ENCODE measurements at regions of chr14 and their contacts with region 1.

Region 1: DNA sequence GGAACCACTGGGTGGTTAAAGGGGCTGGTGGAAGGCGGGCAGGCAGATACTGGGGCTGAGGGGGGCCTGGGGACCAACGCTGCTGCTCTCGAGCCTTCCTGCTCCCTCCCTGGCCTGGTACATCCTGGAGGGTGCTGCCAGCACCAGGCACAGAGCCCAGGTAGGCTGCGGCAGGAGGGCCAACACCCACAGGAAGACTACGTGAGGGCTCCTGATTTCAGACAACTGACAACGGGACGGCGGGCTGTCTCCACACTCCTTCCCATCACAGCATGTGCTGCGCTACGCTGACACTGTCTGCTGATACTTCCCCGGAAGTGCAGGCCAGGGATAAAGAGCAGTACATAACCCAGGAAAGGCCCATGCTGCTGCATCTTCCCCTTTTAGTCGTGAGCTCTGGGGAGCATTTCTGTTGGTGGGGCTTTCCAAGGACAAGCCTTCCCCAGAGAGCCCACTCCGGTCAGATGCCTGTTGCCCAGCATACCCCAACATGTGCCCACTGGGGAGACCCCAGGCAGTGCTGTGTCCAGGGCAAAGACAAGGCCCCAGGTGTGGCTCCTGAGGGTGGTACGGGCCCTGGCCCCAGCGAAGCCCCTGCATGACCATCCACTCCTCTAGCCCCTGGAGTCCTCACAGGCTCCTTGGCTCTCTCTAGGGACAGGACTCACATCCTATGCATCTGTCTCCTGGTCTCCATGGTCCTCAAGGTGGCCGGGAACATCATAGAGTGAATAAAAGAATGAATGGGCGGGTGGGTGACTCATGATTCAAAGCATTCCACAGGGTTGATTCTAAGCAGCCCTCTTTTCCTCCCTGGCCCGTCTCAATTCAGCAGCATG is 38.0 kb downstream of the CHGA start:
- DNase-seq: peak; percentile 65
- H3K4me3 ChIP-seq: no peak overlapping the region
- H3K27ac ChIP-seq: peak overlapping the region; percentile 5 to 78
- H3K4me1 ChIP-seq: peaks cover 40% of the 10 kb centered on the region
- H3K27me3 ChIP-seq: no peaks in the 10 kb centered on the region
- CTCF ChIP-seq: no peak
- POLR2A ChIP-seq: no peak

Region 2: GRCh38 chr14:93045965-93046704 is 85.2 kb after region 1 on chr14:
- intact Hi-C with region 1: loop called (anchors 5 kb)
- DNase-seq: no peak
- H3K4me3 ChIP-seq: no peak overlapping the region
- H3K27ac ChIP-seq: no peak overlapping the region
- H3K4me1 ChIP-seq: peaks cover 25% of the 10 kb centered on the region
- H3K27me3 ChIP-seq: no peaks in the 10 kb centered on the region
- CTCF ChIP-seq: no peak
- POLR2A ChIP-seq: no peak